ENCODE measurements at regions of chr10 and their contacts with region 1.

Region 1: DNA sequence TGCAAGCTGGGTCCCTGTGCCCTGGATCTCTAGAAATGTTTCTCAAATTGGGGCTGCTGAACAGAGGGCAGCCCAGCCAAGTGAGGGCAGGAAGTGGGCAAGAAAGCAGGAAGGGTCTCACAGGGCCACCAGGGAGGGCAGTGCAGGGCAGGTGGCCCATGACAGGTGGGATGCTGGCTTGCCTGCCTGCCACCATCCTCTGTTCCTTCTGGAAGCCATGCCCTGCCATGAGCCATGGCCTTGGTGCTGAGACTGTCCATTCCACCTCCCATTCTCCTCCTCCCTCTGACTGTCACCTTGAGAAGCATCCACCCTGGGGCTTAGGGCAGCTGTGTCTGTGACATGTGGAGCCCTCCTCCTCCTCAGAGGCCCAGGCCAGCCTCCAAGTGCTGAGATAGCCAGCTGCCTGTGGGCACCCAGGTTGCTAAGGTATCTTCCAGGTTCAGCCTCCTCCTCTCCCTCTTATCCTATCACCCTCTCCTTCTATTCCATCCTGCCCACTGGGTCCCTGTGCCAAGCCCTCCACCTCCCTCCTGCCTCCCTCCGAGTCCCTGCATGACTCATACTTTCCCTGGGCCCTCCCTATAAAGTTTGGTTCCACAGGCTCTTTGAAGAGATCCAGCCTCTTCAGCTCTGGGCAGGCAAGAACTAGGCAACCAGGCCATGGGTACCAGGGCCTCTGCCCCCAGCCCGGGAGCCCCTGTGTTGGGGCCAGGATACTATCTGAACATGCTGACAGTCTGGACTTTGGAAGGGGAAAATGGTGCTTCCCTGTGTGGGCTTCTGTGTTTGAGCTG is 1.3 kb downstream of the VSIR start:
- DNase-seq: peak; percentile 47
- H3K4me3 Mint-ChIP-seq: peak overlapping the region; percentile 90
- H3K27ac Mint-ChIP-seq: peak overlapping the region; percentile 91
- H3K4me1 Mint-ChIP-seq: peaks cover 81% of the 10 kb centered on the region
- H3K27me3 Mint-ChIP-seq: no peaks in the 10 kb centered on the region

Region 2: GRCh38 chr10:71696628-71697326 is 75.2 kb before region 1 on chr10:
- CTCF ChIA-PET with region 1: interaction called, 51 read pairs
- POLR2A ChIA-PET with region 1: interaction called, 57 read pairs
- DNase-seq: peak; percentile 71
- H3K4me3 Mint-ChIP-seq: no peak overlapping the region
- H3K27ac Mint-ChIP-seq: no peak overlapping the region
- H3K4me1 Mint-ChIP-seq: peaks cover 65% of the 10 kb centered on the region
- H3K27me3 Mint-ChIP-seq: no peaks in the 10 kb centered on the region

Region 3: GRCh38 chr10:71713135-71714030 is 58.6 kb before region 1 on chr10:
- CTCF ChIA-PET with region 1: interaction called, 28 read pairs
- POLR2A ChIA-PET with region 1: interaction called, 10 read pairs
- DNase-seq: peak; percentile 52
- H3K4me3 Mint-ChIP-seq: peak overlapping the region; percentile 66
- H3K27ac Mint-ChIP-seq: peak overlapping the region; percentile 92
- H3K4me1 Mint-ChIP-seq: peaks cover 54% of the 10 kb centered on the region
- H3K27me3 Mint-ChIP-seq: no peaks in the 10 kb centered on the region

Region 4: GRCh38 chr10:71727738-71728737 is 44.0 kb before region 1 on chr10:
- CTCF ChIA-PET with region 1: interaction called, 78 read pairs
- POLR2A ChIA-PET with region 1: interaction called, 162 read pairs
- DNase-seq: peak; percentile 76
- H3K4me3 Mint-ChIP-seq: peak overlapping the region; percentile 52
- H3K27ac Mint-ChIP-seq: peak overlapping the region; percentile 98
- H3K4me1 Mint-ChIP-seq: peaks cover 76% of the 10 kb centered on the region
- H3K27me3 Mint-ChIP-seq: no peaks in the 10 kb centered on the region

Region 5: DNA sequence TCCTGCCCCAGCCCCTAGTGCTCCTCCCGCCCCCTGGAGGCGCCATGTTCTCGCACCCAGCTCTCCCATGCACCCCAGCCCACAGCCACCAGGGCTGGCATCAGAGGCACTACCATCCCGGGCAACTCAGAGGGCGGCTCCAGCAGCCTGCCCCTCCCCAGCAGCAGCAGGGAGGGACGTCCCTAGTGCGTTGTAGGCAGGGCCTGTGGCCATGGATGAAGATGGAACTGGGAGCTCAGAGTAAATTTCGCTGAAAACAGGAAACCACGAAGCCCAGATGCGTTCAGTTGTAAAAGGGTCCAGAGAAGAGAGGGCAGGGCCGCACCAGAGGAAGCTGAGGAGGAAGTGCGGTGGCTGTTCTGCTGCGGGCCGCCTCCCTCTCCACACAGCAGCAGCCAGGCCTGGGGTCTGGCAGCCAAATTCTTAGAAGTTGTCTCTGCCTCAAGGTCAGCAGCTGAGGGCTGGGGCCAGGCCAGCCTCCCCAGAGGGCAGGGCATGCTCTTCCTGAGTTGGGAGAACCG is 23.3 kb before region 1 on chr10:
- CTCF ChIA-PET with region 1: interaction called, 31 read pairs
- POLR2A ChIA-PET with region 1: interaction called, 65 read pairs
- DNase-seq: peak; percentile 93
- H3K4me3 Mint-ChIP-seq: peak overlapping the region; percentile 43
- H3K27ac Mint-ChIP-seq: peak overlapping the region; percentile 95
- H3K4me1 Mint-ChIP-seq: peaks cover 97% of the 10 kb centered on the region
- H3K27me3 Mint-ChIP-seq: no peaks in the 10 kb centered on the region

Region 6: GRCh38 chr10:71850637-71851464 is 78.8 kb after region 1 on chr10 and contains the start of gene PSAP:
- CTCF ChIA-PET with region 1: interaction called, 5 read pairs
- POLR2A ChIA-PET with region 1: interaction called, 13 read pairs
- DNase-seq: peak; percentile 98
- H3K4me3 Mint-ChIP-seq: peak within 1 kb of the TSS; percentile 88
- H3K27ac Mint-ChIP-seq: peak within 1 kb of the TSS; percentile 73
- H3K4me1 Mint-ChIP-seq: peaks cover 41% of the 10 kb centered on the region
- H3K27me3 Mint-ChIP-seq: peaks cover 4% of the 10 kb centered on the region
- total RNA-seq, gene PSAP: 176 to 178 TPM